H1 (cell line): ENCODE measurements at regions of chr15 and their contacts with region 1.

Region 1: DNA sequence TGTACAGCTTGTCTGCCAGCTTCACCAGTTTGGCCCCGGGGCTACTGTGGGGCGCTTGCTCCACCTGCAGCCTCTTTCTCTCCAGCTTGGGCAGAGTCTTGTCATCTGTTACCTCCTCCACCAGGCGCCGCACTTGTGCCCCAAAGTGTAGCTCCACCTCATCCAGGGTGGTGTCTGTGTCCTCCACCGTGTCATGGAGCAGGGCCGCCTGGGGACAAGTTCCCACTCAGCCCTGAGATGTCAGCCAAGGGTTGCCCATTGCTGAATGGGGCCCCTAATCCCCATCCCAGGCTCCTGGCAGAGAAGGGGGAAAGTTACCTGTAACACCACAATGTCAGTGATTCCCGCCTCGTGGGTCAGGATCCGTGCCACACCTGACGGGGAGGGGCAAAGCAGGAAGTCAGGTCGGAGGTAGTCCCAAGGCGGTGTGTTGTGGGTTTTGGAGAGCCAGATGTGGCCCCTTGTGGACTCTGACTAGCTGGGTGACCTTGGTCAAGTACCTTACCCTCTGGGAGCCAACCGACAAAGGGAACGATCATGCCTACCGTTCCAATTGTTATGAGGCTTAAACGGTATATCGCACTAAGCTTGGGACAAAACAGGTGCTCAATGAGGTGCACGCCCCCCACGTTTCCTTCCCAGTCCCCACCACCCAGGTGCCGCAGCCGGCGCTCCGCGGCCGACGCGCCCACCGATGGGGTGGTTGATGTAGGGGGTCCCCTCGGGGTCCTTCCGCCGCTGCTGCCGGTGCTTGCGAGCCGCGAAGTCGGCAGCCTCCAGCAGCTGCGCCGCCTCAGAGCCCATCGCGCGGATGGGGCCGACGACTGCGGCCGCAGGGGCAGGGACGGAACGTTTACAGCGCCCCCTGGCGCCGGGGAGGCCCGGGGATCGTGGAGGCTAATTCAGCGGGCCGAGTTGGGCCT is at the start of gene HDDC3:
- DNase-seq: peak in 1 of 2 experiments; percentile 99
- H3K4me3 ChIP-seq: peak within 1 kb of the TSS; percentile 58 to 83 (median 76)
- H3K27ac ChIP-seq: peak within 1 kb of the TSS; percentile 39; the same call in 1 of the 2 replicates
- H3K4me1 ChIP-seq: peaks cover 0 to 13% (median 7%) of the 10 kb centered on the region in 4 experiments; a peak in 6 of 7 replicates
- H3K27me3 ChIP-seq: 0 out of 7 replicates have a peak, but pooled peaks cover 0 to 4% (median 0%) of the 10 kb centered on the region in 4 experiments
- CTCF ChIP-seq: peak; percentile 82 to 96 (median 93)
- EP300 ChIP-seq: no peak
- POLR2A ChIP-seq: no peak; a peak in 1 of 3 replicates
- RAD21 ChIP-seq: peak; percentile 39 to 65
- total RNA-seq, gene HDDC3: 16.3 and 17.0 TPM in 2 replicates

Region 2: DNA sequence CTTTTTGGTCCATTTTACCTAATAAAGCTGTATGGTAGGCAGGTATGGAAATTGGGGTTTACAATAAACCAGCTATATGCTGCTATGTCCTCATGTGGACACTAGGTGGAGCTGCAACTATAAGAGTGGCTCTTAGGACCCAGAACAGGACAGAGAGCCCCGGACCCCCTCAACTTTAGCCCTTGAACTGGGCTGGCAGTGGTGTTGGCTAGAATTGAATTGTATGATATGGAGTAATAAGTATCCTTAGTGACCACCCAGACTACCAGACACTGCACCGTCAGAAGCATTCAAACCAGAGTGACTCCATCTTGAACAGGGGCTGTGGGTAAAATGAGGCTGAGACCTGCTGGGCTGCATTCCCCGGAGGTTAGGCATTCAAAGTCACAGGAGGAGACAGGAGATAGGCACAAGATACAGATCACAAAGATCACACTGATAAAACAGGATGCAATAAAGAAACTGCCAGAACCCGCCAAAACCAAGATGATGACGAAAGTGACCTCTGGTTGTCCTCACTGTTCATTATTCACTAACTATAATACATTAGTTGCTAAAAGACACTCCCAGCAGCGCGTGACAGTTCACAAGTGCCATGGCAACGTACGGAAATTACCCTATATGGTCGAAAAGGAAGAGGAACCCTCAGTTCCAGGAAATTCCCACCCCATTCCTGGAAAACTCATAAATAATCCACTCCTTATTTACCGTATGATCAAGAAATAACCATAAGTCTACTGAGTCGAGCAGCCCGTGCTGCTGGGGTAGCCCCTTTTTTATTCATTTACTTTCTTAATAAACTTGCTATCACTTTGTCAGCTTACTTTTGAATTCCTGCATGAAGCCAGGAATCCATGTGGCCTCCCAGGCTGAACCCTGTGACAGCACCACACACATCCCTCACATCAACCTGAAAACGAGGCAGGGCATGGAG is 283.6 kb before region 1 on chr15:
- CTCF ChIA-PET with region 1: interaction called, 10 read pairs
- POLR2A ChIA-PET with region 1: no interaction called
- DNase-seq: peak in 1 of 2 experiments; percentile 74
- H3K4me3 ChIP-seq: no peak overlapping the region
- H3K27ac ChIP-seq: no peak overlapping the region
- H3K4me1 ChIP-seq: peaks cover 0 to 6% (median 4%) of the 10 kb centered on the region in 4 experiments; a peak in 6 of 7 replicates
- H3K27me3 ChIP-seq: no peaks in the 10 kb centered on the region
- CTCF ChIP-seq: peak; percentile 40 to 84 (median 83)
- EP300 ChIP-seq: no peak
- POLR2A ChIP-seq: no peak
- RAD21 ChIP-seq: peak; percentile 90 to 95

Region 3: DNA sequence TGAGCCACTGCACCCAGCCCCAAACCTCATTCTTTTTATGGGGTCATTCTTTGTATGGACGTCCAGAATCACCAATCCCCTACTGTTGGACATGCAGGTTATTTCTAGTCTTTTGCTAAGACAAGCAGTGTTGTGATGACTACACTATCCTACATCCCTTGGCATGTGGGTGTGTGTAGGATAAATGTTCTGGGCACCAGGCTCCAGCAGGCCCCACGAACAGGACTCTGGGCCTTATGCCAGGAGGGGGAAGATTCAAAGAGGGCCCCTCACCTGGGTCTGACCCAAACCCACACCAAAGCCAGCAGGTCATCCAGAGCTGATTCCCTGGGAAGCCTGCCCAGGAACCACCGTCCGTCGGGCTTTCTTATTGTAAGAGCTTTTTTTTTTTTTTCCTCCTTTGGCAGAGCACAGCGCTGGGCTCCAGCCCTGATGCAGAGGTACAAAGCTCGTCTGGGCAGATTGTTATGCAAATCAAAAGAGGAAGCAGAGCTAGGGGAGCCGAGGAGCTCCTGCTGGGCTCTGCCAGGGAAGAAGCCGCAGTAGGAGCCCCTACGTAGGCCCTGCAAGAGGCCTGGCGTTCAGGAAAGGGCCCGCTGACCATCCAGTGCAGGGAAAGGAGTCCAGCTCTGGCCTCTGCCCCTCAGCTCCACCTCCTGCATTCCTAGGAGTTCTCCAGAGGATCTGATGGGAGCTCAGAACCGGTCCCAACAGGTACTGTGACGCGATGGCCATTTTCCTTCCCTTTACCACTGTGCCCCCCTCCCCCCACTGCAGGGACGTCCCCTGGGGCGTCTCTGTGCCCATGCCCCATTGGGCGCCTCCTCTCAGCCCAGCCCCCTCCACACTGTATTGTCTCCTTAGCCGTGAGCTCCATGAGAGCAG is 92.6 kb before region 1 on chr15:
- CTCF ChIA-PET with region 1: interaction called, 15 read pairs
- POLR2A ChIA-PET with region 1: interaction called, 3 read pairs
- DNase-seq: peak; percentile 75 to 85
- H3K4me3 ChIP-seq: peak overlapping the region in 3 of 4 experiments; percentile 15 to 30 (median 26); a peak in 3 of 8 replicates
- H3K27ac ChIP-seq: no peak overlapping the region
- H3K4me1 ChIP-seq: peaks cover 6 to 21% (median 18%) of the 10 kb centered on the region in 4 experiments
- H3K27me3 ChIP-seq: no peaks in the 10 kb centered on the region
- CTCF ChIP-seq: no peak; a peak in 1 of 4 replicates
- EP300 ChIP-seq: no peak; a peak in 1 of 3 replicates
- POLR2A ChIP-seq: 0 out of 3 replicates have a peak, but pooled peaks of 1 of the 2 experiments have one; percentile 34
- RAD21 ChIP-seq: no peak; a peak in 1 of 4 replicates

Region 4: DNA sequence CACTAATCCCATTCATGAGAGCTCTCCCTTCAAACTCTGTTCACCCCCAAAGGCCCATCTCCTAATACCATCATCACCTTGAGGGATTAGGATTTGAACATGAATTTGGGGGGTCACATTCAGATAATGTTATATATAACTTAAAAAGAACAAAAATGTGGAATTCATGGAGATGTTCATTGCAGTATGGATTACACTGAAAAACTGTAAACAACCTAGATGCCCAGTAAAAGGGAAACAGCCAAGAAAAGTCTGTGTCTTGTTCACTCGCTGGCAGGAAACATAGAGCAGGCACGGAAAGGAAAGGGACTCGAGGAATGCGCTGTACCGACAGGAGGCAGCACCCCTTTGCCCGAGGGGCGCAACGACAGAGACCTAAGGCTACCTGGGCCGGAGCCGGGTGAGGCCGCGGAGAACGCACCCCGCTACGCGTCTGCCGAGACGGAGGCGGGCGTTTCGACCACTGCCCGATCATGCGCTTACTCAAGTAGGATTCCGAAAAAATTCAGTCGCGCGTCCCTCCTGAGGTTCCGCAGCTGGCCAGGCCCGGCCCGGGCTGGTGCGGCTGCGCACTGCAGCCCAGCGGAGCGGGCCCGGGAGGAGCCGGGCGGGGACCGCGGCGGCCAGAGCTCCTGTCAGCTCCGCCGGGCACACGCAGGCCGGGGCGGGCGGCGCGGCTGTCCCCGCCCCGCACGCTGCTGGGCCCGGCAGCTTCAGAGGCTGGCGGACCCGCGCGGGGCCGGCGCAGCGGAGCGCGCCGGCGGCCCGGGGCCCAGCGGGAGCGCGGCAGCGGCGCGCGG is 29.8 kb before region 1 on chr15:
- CTCF ChIA-PET with region 1: interaction called, 187 read pairs
- POLR2A ChIA-PET with region 1: interaction called, 24 read pairs
- DNase-seq: peak in 1 of 2 experiments; percentile 86
- H3K4me3 ChIP-seq: peak overlapping the region; percentile 52 to 77 (median 73)
- H3K27ac ChIP-seq: no peak overlapping the region
- H3K4me1 ChIP-seq: peaks cover 5 to 8% (median 7%) of the 10 kb centered on the region in 4 experiments; a peak in 6 of 7 replicates
- H3K27me3 ChIP-seq: peaks cover 0 to 16% (median 9%) of the 10 kb centered on the region in 4 experiments; a peak in 5 of 7 replicates
- CTCF ChIP-seq: peak; percentile 53 to 85 (median 81)
- EP300 ChIP-seq: no peak
- POLR2A ChIP-seq: no peak
- RAD21 ChIP-seq: no peak; a peak in 1 of 4 replicates

Region 5: DNA sequence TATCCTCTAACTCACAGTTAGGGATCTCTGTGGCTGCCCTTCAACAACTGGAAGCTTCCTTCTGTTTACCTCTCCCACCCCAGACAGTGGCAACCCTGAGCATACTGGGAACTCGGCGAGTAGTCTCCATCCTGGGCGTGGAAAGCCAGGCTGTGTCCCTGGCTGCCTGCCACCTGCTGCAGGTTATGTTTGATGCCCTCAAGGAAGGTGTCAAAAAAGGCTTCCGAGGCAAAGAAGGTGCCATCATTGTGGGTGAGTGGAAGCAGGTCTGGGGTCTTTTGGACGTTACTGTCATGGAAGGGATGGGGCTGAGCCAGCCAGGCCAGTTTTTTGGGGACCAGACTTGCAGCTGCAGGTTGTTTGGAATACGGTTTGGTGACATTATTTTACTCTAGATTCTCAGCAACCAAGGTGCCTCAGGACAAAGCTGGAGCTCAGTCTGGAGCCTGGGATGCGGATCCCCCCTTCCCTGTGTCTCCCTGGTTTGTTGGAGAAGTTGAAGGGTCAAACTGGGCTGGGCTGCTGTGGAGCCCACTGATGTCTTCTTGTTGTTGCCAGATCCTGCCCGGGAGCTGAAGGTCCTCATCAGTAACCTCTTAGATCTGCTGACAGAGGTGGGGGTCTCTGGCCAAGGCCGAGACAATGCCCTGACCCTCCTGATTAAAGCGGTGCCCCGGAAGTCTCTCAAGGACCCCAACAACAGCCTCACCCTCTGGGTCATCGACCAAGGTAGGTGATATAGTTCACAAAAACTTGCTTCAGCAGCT is 10.5 kb after region 1 on chr15:
- CTCF ChIA-PET with region 1: interaction called, 306 read pairs
- POLR2A ChIA-PET with region 1: interaction called, 6 read pairs
- DNase-seq: no peak
- H3K4me3 ChIP-seq: no peak overlapping the region
- H3K27ac ChIP-seq: no peak overlapping the region
- H3K4me1 ChIP-seq: no peaks in the 10 kb centered on the region
- H3K27me3 ChIP-seq: no peaks in the 10 kb centered on the region
- CTCF ChIP-seq: no peak
- EP300 ChIP-seq: no peak
- POLR2A ChIP-seq: no peak
- RAD21 ChIP-seq: no peak

Region 6: DNA sequence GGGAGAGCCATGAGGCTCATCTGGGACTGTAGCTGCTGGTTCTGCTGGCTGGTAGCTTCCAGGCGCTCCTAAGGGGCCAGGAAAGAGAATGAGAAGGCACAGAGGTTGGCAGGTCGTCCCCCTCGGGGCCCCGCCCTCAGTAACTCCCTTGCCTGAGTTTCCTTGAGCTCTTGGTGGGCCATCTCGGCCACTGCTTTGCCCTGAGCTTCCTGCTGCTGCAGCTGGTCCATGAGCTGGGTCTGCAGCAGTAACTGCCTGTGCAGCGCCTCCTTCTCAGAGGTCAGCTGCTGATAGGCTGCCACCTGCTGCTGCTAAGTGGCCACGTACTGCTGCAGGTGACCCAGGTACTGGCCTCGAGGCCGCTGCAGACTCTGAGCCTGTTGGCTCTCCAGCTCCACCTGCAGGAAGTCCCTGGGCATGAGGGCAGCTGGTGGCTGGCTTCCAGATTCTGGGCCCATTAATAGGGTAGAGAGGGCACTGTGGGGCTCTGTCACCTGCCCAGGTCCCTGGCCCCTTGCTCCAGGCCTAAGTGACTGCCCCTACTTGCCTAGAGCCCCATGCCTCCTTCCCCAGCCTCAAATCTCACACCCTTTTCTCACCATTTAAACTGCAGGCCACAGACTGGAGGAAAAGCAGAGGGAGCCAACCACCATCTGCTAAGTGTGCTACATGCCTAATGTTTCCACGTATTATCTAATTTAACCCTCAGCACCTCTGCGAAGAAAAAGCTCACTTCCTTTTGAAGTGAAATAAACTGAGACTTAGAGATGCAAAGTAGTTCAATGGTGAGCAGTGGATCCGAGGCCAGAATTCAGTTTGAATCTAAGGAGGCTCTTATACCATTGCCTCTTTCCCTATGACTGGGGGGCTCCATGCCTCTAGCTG is 101.2 kb after region 1 on chr15:
- CTCF ChIA-PET with region 1: interaction called, 35 read pairs
- POLR2A ChIA-PET with region 1: interaction called, 3 read pairs
- DNase-seq: peak; percentile 82 to 94
- H3K4me3 ChIP-seq: 0 out of 8 replicates have a peak overlapping the region, but pooled peaks of 1 of the 4 experiments have one; percentile 7
- H3K27ac ChIP-seq: no peak overlapping the region
- H3K4me1 ChIP-seq: peaks cover 0 to 3% (median 1%) of the 10 kb centered on the region in 4 experiments; a peak in 3 of 7 replicates
- H3K27me3 ChIP-seq: no peaks in the 10 kb centered on the region; a peak in 1 of 7 replicates
- CTCF ChIP-seq: peak; percentile 75 to 88 (median 87)
- EP300 ChIP-seq: no peak
- POLR2A ChIP-seq: no peak
- RAD21 ChIP-seq: peak; percentile 65 to 74